ENCODE measurements at regions of chr9 and their contacts with region 1.

Region 1: DNA sequence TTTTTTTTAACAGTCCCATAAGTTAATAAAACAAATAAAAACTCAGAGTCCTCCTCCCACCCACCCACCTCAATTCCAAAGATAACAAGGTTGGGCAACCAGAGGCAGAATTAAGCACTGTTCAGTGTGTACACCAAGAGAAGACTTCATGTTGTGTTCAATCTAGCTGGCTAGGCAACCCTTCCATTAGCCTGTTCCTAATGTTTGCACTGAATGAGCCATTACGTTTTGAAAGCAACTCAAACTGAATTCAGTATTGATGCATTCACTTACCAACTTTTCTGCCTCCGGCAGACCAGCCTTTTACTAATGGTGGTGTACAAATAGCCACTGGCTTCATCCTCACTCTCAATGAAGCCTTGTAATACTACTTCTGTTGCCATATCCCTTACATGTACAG is 47.5 kb downstream of the PBX3 start:
- DNase-seq: no peak
- H3K4me3 ChIP-seq: no peak overlapping the region
- H3K27ac ChIP-seq: no peak overlapping the region
- H3K4me1 ChIP-seq: no peaks in the 10 kb centered on the region
- H3K27me3 ChIP-seq: no peaks in the 10 kb centered on the region
- CTCF ChIP-seq: no peak

Region 2: GRCh38 chr9:125663127-125663526 is 131.6 kb before region 1 on chr9:
- CTCF ChIA-PET with region 1: no interaction called
- POLR2A ChIA-PET with region 1: interaction called, 19 read pairs
- intact Hi-C with region 1: no loop called
- DNase-seq: peak in 1 of 2 experiments; percentile 79
- H3K4me3 ChIP-seq: no peak overlapping the region
- H3K27ac ChIP-seq: peak overlapping the region; percentile 57
- H3K4me1 ChIP-seq: peaks cover 11% of the 10 kb centered on the region; the same call in 1 of the 2 replicates
- H3K27me3 ChIP-seq: no peaks in the 10 kb centered on the region
- CTCF ChIP-seq: no peak

Measured in PC-9 (cell line).